HEK293 (cell line): ENCODE measurements at regions of chr1 and their contacts with region 1.

Region 1: DNA sequence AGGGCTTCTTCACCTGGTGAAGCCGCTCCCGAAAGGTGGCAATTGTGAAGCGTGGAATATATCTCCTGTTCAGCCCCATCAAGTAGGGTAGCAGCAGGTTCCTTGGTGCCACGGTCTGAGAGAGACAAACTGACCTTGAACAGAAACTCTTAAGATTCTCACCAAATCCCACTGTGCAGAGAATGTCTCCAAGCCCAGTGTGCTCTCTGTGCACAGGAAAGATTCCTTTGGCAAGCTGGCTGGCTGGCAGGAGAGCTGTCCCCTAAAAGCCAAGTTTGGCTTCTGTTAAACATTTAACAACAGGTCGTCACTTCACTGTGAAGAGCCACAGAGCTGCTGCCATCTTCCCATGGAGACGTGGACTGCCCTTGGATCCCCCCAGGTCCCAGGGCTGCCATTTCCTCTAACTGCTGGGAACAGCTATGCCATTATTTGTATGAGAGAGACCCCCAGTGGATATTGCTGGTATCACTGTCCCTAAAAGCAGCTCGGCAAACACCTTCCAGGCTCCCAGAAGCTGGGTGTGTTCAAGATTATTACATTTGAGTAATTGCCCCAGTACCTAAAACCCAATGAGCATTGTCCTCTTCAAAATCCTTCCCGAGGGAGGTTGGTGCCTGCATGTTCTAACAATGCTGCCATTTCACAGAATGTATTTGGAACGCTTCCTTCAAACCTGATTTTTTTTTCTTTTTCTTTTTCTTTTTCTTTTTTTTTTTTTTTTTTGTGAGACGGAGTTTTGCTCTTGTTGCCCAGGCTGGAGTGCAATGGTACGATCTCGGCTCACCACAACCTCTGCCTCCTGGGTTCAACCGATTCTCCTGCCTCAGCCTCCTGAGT is 71.8 kb downstream of the CD58 start:
- H3K4me3 ChIP-seq: no peak overlapping the region
- H3K27ac ChIP-seq: no peak overlapping the region
- H3K4me1 ChIP-seq: no peaks in the 10 kb centered on the region
- CTCF ChIP-seq: peak; percentile 85

Region 2: GRCh38 chr1:116151739-116152576 is 347.1 kb before region 1 on chr1:
- CTCF ChIA-PET with region 1: interaction called, 11 read pairs
- POLR2A ChIA-PET with region 1: no interaction called
- H3K4me3 ChIP-seq: peak overlapping the region; percentile 42
- H3K27ac ChIP-seq: no peak overlapping the region; the same call in 1 of the 2 replicates
- H3K4me1 ChIP-seq: no peaks in the 10 kb centered on the region
- CTCF ChIP-seq: peak; percentile 94

Region 3: GRCh38 chr1:116168277-116169097 is 330.5 kb before region 1 on chr1:
- CTCF ChIA-PET with region 1: no interaction called
- POLR2A ChIA-PET with region 1: no interaction called
- H3K4me3 ChIP-seq: peak overlapping the region; percentile 27
- H3K27ac ChIP-seq: no peak overlapping the region; the same call in 1 of the 2 replicates
- H3K4me1 ChIP-seq: no peaks in the 10 kb centered on the region
- CTCF ChIP-seq: peak; percentile 31; the same call in 1 of the 2 replicates

Region 4: GRCh38 chr1:116377541-116378529 is 121.2 kb before region 1 on chr1:
- CTCF ChIA-PET with region 1: interaction called, 10 read pairs
- POLR2A ChIA-PET with region 1: no interaction called
- H3K4me3 ChIP-seq: peak overlapping the region; percentile 18
- H3K27ac ChIP-seq: peak overlapping the region; percentile 28
- H3K4me1 ChIP-seq: peaks cover 43% of the 10 kb centered on the region
- CTCF ChIP-seq: no peak

Region 5: GRCh38 chr1:116587496-116588227 is 88.7 kb after region 1 on chr1:
- CTCF ChIA-PET with region 1: no interaction called
- POLR2A ChIA-PET with region 1: no interaction called
- H3K4me3 ChIP-seq: no peak overlapping the region
- H3K27ac ChIP-seq: no peak overlapping the region
- H3K4me1 ChIP-seq: no peaks in the 10 kb centered on the region
- CTCF ChIP-seq: no peak